PC-9 (cell line): ENCODE measurements at regions of chr16 and their contacts with region 1.

Region 1: GRCh38 chr16:28823872-28824716 is 1.3 kb downstream of the ATXN2L start:
- DNase-seq: peak; percentile 89 to 99
- H3K4me3 ChIP-seq: peak overlapping the region; percentile 74
- H3K27ac ChIP-seq: peak overlapping the region; percentile 86
- H3K4me1 ChIP-seq: peaks cover 21% of the 10 kb centered on the region
- H3K27me3 ChIP-seq: no peaks in the 10 kb centered on the region
- CTCF ChIP-seq: no peak; the same call in 1 of the 2 replicates

Region 2: GRCh38 chr16:28098959-28099945 is 724.8 kb before region 1 on chr16:
- CTCF ChIA-PET with region 1: no interaction called
- POLR2A ChIA-PET with region 1: no interaction called
- intact Hi-C with region 1: no loop called
- DNase-seq: no peak
- H3K4me3 ChIP-seq: no peak overlapping the region
- H3K27ac ChIP-seq: no peak overlapping the region
- H3K4me1 ChIP-seq: no peaks in the 10 kb centered on the region
- H3K27me3 ChIP-seq: no peaks in the 10 kb centered on the region
- CTCF ChIP-seq: no peak

Region 3: GRCh38 chr16:28846080-28846932 is 22.2 kb after region 1 on chr16 and contains the start of gene TUFM:
- CTCF ChIA-PET with region 1: interaction called, 5 read pairs
- POLR2A ChIA-PET with region 1: interaction called, 8 read pairs
- intact Hi-C with region 1: loop called (anchors 1 kb)
- DNase-seq: peak; percentile 97 to 99
- H3K4me3 ChIP-seq: peak within 1 kb of the TSS; percentile 89
- H3K27ac ChIP-seq: peak within 1 kb of the TSS; percentile 35
- H3K4me1 ChIP-seq: peaks cover 8% of the 10 kb centered on the region
- H3K27me3 ChIP-seq: no peaks in the 10 kb centered on the region
- CTCF ChIP-seq: peak; percentile 69
- total RNA-seq, gene TUFM: 342 and 448 TPM in 2 replicates

Region 4: DNA sequence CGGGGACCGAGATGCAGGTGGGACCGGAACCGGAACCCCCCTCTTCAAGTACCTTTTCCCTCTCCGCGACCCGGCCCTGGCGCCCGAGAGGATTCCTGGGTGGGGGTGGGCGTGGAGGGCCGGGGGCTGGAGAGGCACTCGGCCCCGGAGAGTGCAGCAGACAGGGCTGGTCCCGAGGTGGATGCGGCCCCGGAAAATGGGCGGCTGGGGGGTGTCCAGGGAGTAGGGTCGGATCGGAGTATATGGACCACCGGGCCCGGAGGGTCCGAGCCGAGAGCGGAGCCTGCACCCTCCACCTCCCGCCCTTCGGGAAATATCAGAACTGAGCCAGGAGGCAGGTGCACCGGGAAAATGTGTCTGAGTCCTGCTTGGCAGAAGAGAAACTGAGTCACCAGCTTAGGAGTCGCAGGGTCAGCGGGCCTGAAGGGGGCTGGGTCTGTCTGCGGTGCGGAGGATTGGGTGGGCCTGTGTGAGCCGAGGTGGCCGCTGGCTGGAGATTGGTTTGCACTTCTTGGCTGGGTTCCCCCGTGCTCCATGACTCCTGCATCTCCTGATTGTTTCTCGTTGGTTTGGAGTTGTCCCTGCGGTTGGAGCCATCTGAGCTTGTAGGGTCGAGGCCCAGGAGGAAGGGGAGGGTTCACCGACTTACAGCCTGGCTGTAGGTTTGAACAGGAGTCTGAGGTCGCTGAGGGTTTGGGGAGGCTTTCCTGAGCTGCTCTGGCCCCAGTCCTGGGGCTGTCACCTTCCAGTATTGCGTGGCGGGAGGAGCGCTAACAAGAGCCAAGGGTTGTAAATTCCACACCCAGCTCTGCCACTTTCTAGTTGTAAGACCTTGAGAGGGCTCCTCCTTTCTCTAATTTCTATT is 40.1 kb after region 1 on chr16:
- CTCF ChIA-PET with region 1: no interaction called
- POLR2A ChIA-PET with region 1: no interaction called
- intact Hi-C with region 1: loop called (anchors 1 kb)
- DNase-seq: peak in 1 of 2 experiments; percentile 18
- H3K4me3 ChIP-seq: peak overlapping the region; percentile 67
- H3K27ac ChIP-seq: peak overlapping the region; percentile 66
- H3K4me1 ChIP-seq: peaks cover 20% of the 10 kb centered on the region
- H3K27me3 ChIP-seq: no peaks in the 10 kb centered on the region
- CTCF ChIP-seq: no peak

Region 5: GRCh38 chr16:28950648-28951409 is 126.7 kb after region 1 on chr16 and contains the start of gene NFATC2IP:
- CTCF ChIA-PET with region 1: no interaction called
- POLR2A ChIA-PET with region 1: interaction called, 6 read pairs
- intact Hi-C with region 1: loop called (anchors 1 kb)
- DNase-seq: peak; percentile 100
- H3K4me3 ChIP-seq: peak within 1 kb of the TSS; percentile 84
- H3K27ac ChIP-seq: peak within 1 kb of the TSS; percentile 38; the same call in 1 of the 2 replicates
- H3K4me1 ChIP-seq: peaks cover 16% of the 10 kb centered on the region
- H3K27me3 ChIP-seq: no peaks in the 10 kb centered on the region
- CTCF ChIP-seq: no peak
- total RNA-seq, gene NFATC2IP: 72.3 and 73.0 TPM in 2 replicates